Endothelial cell of umbilical vein (primary cell): ENCODE measurements at regions of chr15 and their contacts with region 1.

Region 1: GRCh38 chr15:93852761-93853160 is 378.6 kb upstream of the MCTP2 start:
- DNase-seq: no peak
- H3K4me3 ChIP-seq: no peak overlapping the region
- H3K27ac ChIP-seq: no peak overlapping the region
- H3K4me1 ChIP-seq: no peaks in the 10 kb centered on the region
- H3K27me3 ChIP-seq: no peaks in the 10 kb centered on the region
- CTCF ChIP-seq: no peak
- POLR2A ChIP-seq: no peak

Region 2: GRCh38 chr15:93866476-93866875 is 13.7 kb after region 1 on chr15:
- CTCF ChIA-PET with region 1: no interaction called
- POLR2A ChIA-PET with region 1: no interaction called
- dilution Hi-C with region 1: no loop called
- intact Hi-C with region 1: no loop called
- DNase-seq: no peak
- H3K4me3 ChIP-seq: no peak overlapping the region
- H3K27ac ChIP-seq: no peak overlapping the region
- H3K4me1 ChIP-seq: no peaks in the 10 kb centered on the region
- H3K27me3 ChIP-seq: no peaks in the 10 kb centered on the region
- CTCF ChIP-seq: no peak
- POLR2A ChIP-seq: no peak

Region 3: GRCh38 chr15:94066046-94066445 is 213.3 kb after region 1 on chr15:
- CTCF ChIA-PET with region 1: no interaction called
- POLR2A ChIA-PET with region 1: no interaction called
- dilution Hi-C with region 1: no loop called
- intact Hi-C with region 1: loop called (anchors 5 kb)
- DNase-seq: no peak
- H3K4me3 ChIP-seq: no peak overlapping the region
- H3K27ac ChIP-seq: no peak overlapping the region
- H3K4me1 ChIP-seq: no peaks in the 10 kb centered on the region
- H3K27me3 ChIP-seq: no peaks in the 10 kb centered on the region
- CTCF ChIP-seq: no peak
- POLR2A ChIP-seq: no peak